Activated T-helper 2 cell treated with anti-CD3 and anti-CD28 coated beads, Interferon-gamma antibody, Interleukin-2, Interleukin-4, amounts not matched to agents 10 μg/mL and 5 μg/mL and 100 μg/mL, durations not matched to agents 14 hours and 24 hours and 36 hours (primary cell): ENCODE measurements at regions of chr6 and their contacts with region 1.

Region 1: GRCh38 chr6:78910591-78911171 is 43.3 kb downstream of the IRAK1BP1 start:
- DNase-seq: peak; percentile 19
- H3K4me3 Mint-ChIP-seq: peak overlapping the region; percentile 72
- H3K27ac Mint-ChIP-seq: no peak overlapping the region
- H3K4me1 Mint-ChIP-seq: peaks cover 10% of the 10 kb centered on the region
- H3K27me3 Mint-ChIP-seq: peaks cover 27% of the 10 kb centered on the region

Region 2: GRCh38 chr6:78867370-78868040 is 43.2 kb before region 1 on chr6 and contains the start of gene IRAK1BP1:
- intact Hi-C with region 1: loop called (anchors 5 kb)
- DNase-seq: peak; percentile 82
- H3K4me3 Mint-ChIP-seq: peak within 1 kb of the TSS; percentile 90
- H3K27ac Mint-ChIP-seq: peak within 1 kb of the TSS; percentile 93
- H3K4me1 Mint-ChIP-seq: peaks cover 12% of the 10 kb centered on the region
- H3K27me3 Mint-ChIP-seq: no peaks in the 10 kb centered on the region
- total RNA-seq, gene IRAK1BP1: 2.3 and 2.6 TPM in 2 replicates

Region 3: GRCh38 chr6:79180060-79180459 is 269.4 kb after region 1 on chr6:
- intact Hi-C with region 1: no loop called
- DNase-seq: no peak
- H3K4me3 Mint-ChIP-seq: no peak overlapping the region
- H3K27ac Mint-ChIP-seq: no peak overlapping the region
- H3K4me1 Mint-ChIP-seq: no peaks in the 10 kb centered on the region
- H3K27me3 Mint-ChIP-seq: peaks cover 5% of the 10 kb centered on the region